Dendritic cell treated with granulocyte-macrophage colony-stimulating factor and Interleukin-4, amounts not matched to agents 40 ng/mL and 50 ng/mL, for 4 days (primary cell): ENCODE measurements at regions of chr1 and their contacts with region 1.

Region 1: GRCh38 chr1:119675349-119676345 is 27.6 kb upstream of the ZNF697 start:
- H3K4me3 Mint-ChIP-seq: peak overlapping the region; percentile 61
- H3K27ac Mint-ChIP-seq: no peak overlapping the region
- H3K4me1 Mint-ChIP-seq: peaks cover 5% of the 10 kb centered on the region
- H3K27me3 Mint-ChIP-seq: peaks cover 7% of the 10 kb centered on the region

Region 2: DNA sequence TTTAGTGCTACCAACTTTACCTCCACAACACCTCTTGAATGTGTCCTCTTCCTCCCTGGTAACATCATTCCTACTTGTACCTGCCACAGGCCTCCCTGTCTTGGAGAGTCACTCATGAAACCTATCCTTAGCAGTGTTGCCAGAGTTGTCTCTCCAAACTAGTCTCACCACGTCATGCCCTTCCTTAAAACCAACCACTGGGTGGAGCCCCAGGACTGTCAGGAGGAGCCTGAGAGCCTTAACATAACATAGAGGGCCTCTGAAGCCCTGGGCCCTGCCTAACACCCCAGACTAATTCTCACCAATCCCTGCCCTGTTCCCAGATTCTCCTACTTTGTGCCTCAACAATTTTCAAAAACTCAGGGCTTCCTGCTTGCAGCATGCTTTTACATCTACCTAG is 92.8 kb before region 1 on chr1:
- intact Hi-C with region 1: loop called (anchors 1 kb)
- H3K4me3 Mint-ChIP-seq: no peak overlapping the region
- H3K27ac Mint-ChIP-seq: peak overlapping the region; percentile 4
- H3K4me1 Mint-ChIP-seq: peaks cover 63% of the 10 kb centered on the region
- H3K27me3 Mint-ChIP-seq: no peaks in the 10 kb centered on the region

Region 3: DNA sequence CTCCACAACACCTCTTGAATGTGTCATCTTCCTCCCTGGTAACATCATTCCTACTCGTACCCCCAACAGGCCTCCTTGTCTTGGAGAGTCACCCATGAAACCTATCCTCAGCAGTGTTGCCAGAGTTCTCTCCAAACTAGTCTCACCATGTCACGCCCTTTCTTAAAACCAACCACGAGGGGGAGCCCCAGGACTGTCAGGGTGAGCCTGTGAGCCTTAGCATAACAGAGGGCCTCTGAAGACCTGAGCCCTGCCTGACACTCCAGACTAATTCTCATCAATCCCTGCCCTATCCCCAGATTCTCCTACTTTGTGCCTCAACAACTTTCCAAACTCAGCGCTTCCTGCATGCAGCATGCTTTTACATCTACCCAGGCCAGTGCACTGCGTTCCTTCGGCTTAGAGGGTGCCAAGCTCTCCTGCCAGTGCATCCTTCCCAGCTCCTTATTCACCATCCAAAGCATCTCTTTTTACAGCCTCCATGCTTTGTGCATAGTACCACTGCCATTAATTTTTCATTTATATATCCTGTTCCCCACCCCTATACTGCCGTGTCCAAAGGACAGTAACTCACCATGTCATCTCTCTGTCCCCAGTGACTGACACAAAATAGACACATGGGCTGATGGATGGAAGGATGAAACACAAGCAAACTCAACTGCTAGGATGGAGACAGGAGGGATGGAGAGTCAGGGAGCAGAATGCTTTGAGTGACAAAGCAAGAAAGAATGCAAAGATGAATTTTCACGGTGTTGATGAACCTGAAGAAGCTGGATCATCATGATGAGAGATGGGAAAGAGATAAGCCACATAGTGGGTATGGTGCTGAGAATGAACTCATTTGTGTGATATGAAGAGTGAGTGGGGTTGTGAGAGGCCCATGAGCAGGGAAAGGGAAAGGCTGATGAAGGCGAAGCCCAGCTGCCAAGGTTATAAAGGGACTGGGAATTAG is 61.6 kb before region 1 on chr1:
- intact Hi-C with region 1: loop called (anchors 1 kb)
- H3K4me3 Mint-ChIP-seq: no peak overlapping the region
- H3K27ac Mint-ChIP-seq: no peak overlapping the region
- H3K4me1 Mint-ChIP-seq: peaks cover 43% of the 10 kb centered on the region
- H3K27me3 Mint-ChIP-seq: no peaks in the 10 kb centered on the region